Activated CD4-positive, alpha-beta T cell treated with anti-CD3 and anti-CD28 coated beads for 36 hours (primary cell): ENCODE measurements at regions of chr17 and their contacts with region 1.

Region 1: DNA sequence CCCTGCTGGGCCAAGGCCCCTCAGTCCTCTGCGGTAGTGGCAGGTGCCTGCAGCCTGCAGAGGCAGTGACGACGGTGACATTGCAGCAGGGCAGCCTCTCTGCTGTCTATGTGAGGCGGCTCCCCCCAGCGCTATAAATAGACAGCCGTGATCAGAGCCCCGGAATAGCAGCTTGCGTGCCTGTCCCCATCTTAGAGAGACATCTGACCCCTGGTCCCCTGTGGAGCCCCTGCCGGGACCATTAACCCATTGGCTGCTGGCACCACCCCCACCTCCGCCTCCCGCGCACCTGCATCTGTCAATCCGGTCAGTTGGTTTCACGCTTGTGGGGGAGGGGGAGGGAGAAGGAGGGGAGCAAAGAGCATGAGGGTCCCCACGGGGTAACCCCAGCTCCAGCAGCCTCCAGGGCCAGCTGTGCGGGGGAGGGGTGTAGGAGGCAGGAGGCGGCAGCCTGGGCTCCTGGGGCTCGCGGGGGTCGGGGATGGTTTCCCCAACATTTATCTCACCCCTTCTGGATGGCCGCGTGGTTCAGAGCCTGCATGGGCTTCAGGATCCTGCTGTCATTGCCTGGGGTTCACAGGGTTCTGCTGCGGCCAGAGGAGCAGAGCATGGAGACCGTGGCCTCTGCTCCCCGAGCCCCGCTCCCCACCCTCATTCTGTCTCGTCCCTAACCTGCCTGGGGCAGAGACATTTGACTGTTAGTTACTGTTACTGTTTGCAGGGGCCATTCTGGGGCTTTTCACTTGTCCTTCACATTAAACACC is 4.9 kb upstream of the PYCR1 start:
- DNase-seq: no peak
- ATAC-seq: no peak
- H3K4me3 Mint-ChIP-seq: no peak overlapping the region
- H3K27ac Mint-ChIP-seq: no peak overlapping the region
- H3K4me1 Mint-ChIP-seq: peaks cover 5% of the 10 kb centered on the region
- H3K27me3 Mint-ChIP-seq: peaks cover 5% of the 10 kb centered on the region

Region 2: GRCh38 chr17:81840826-81841778 is 100.9 kb before region 1 on chr17:
- CTCF ChIA-PET with region 1: no interaction called
- POLR2A ChIA-PET with region 1: no interaction called
- intact Hi-C with region 1: no loop called
- DNase-seq: no peak
- ATAC-seq: no peak
- H3K4me3 Mint-ChIP-seq: no peak overlapping the region
- H3K27ac Mint-ChIP-seq: no peak overlapping the region
- H3K4me1 Mint-ChIP-seq: no peaks in the 10 kb centered on the region
- H3K27me3 Mint-ChIP-seq: no peaks in the 10 kb centered on the region

Region 3: GRCh38 chr17:81917565-81918332 is 24.2 kb before region 1 on chr17 and contains the start of gene SIRT7:
- CTCF ChIA-PET with region 1: no interaction called
- POLR2A ChIA-PET with region 1: no interaction called
- intact Hi-C with region 1: loop called in 1 of 2 experiments (anchors 1 kb)
- DNase-seq: peak; percentile 90
- ATAC-seq: peak; percentile 87
- H3K4me3 Mint-ChIP-seq: peak within 1 kb of the TSS; percentile 85
- H3K27ac Mint-ChIP-seq: peak within 1 kb of the TSS; percentile 82
- H3K4me1 Mint-ChIP-seq: peaks cover 23% of the 10 kb centered on the region
- H3K27me3 Mint-ChIP-seq: no peaks in the 10 kb centered on the region
- total RNA-seq, gene SIRT7: 29.3 to 31.8 TPM

Region 4: GRCh38 chr17:82188001-82188961 is 246.3 kb after region 1 on chr17:
- CTCF ChIA-PET with region 1: no interaction called
- POLR2A ChIA-PET with region 1: no interaction called
- intact Hi-C with region 1: no loop called
- DNase-seq: no peak
- ATAC-seq: no peak
- H3K4me3 Mint-ChIP-seq: no peak overlapping the region
- H3K27ac Mint-ChIP-seq: no peak overlapping the region
- H3K4me1 Mint-ChIP-seq: no peaks in the 10 kb centered on the region
- H3K27me3 Mint-ChIP-seq: no peaks in the 10 kb centered on the region